ENCODE measurements at regions of chr19 and their contacts with region 1.

Region 1: GRCh38 chr19:771332-771785 is 20.4 kb downstream of the MISP start:
- DNase-seq: no peak
- H3K4me3 ChIP-seq: no peak overlapping the region
- H3K27ac ChIP-seq: no peak overlapping the region
- H3K4me1 ChIP-seq: no peaks in the 10 kb centered on the region
- H3K27me3 ChIP-seq: no peaks in the 10 kb centered on the region
- CTCF ChIP-seq: no peak
- EP300 ChIP-seq: no peak
- POLR2A ChIP-seq: no peak

Region 2: DNA sequence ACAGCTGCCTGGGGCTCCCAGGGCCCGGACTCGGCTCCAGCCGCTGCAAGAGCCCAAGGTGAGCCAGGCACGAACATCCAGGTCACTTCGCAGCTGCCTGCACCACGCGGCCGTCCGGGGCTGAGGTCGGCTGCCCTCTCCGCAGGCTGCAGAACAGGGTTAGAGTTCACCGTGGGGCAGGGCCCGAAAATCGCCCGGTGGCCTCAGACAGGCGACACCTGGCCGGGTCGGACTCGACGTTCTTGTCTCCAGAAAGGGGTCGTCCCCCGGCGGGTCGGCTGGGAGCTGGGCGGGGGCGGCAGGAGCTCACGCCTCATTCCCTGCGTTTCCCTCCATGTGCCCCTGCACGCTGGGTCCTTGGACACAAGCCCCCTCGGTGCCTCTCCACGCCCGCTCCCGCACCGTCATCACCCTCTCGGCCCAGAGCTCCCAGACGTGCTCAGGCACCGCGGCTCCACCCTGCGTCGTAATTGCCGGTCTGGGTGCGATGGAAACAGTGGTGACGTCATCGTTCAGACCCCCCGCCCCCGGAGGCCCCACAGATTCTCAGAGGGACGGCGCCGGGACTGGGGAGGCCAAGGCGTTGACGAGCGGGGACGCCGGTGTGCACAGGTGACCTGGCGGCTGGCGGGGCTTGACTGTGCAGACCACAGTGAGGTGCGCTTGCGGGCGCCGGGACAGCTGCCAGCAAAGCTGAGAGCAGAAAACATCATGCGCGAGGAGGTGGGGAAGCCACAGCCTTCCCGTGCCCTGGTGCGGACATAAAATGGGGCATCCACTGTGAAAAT is 224.9 kb after region 1 on chr19:
- intact Hi-C with region 1: loop called in 1 of 4 experiments (anchors 10 kb)
- DNase-seq: peak in 2 of 5 donors; percentile 64 to 67
- H3K4me3 ChIP-seq: no peak overlapping the region
- H3K27ac ChIP-seq: no peak overlapping the region
- H3K4me1 ChIP-seq: peaks cover 2% of the 10 kb centered on the region
- H3K27me3 ChIP-seq: peaks cover 13% of the 10 kb centered on the region
- CTCF ChIP-seq: no peak
- EP300 ChIP-seq: no peak
- POLR2A ChIP-seq: no peak